ENCODE measurements at regions of chr7 and their contacts with region 1.

Region 1: DNA sequence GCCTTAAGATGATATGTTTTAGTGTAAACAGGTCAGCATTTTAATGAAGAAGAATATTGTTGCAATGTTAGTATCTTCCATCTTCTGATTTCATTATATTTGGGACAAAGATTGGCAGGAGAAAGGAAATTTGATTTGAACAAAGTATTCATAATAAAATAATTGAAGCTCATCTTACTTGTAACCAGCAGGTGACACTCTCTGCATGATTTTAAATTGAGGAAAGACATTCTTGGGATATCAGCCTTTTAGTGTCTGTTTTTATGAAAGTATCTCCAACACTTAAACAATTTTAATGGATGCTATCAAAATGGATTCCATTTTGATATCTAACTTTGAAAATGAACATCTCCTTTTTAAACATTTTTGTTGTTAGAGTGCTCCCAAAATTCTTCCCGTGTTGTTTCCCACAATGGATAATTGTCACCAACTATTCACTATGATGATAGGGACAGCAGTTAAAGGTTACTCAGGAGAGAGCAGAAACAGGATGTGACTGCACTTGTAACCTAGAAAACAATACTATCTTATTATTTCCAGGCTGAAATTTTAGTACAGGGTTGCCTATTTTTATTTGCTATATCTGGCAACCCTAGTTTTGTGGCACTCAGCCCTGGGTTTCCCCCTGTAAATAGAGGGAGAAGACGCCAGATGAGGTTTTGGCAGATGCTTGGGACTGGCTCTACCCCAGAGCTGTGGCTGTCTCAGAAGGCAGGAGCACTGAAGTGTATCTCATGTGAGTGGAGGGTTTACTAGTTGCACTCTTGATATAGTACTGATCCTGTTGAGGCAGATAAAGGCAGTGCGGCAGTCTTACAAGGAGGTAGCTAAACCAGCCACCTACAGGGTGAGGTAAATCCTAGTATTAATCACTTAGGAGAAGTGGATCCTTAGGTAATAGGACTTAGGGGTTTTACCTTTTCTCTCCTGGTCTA is 31.0 kb upstream of the ABCB4 start:
- DNase-seq: peak; percentile 43
- ATAC-seq: peak; percentile 57; the same call in 1 of the 2 replicates
- H3K4me3 ChIP-seq: no peak overlapping the region
- H3K27ac ChIP-seq: no peak overlapping the region
- H3K4me1 ChIP-seq: peaks cover 3% of the 10 kb centered on the region; the same call in 1 of the 2 replicates
- H3K27me3 ChIP-seq: peaks cover 2% of the 10 kb centered on the region; the same call in 1 of the 2 replicates
- CTCF ChIP-seq: peak; percentile 70
- POLR2A ChIP-seq: no peak
- RAD21 ChIP-seq: peak; percentile 68

Region 2: GRCh38 chr7:87528741-87529140 is 22.2 kb after region 1 on chr7:
- CTCF ChIA-PET with region 1: no interaction called
- POLR2A ChIA-PET with region 1: no interaction called
- dilution Hi-C with region 1: no loop called
- in situ Hi-C with region 1: no loop called
- intact Hi-C with region 1: no loop called
- DNase-seq: no peak
- ATAC-seq: no peak
- H3K4me3 ChIP-seq: no peak overlapping the region
- H3K27ac ChIP-seq: no peak overlapping the region
- H3K4me1 ChIP-seq: no peaks in the 10 kb centered on the region
- H3K27me3 ChIP-seq: no peaks in the 10 kb centered on the region; the same call in 1 of the 2 replicates
- CTCF ChIP-seq: no peak
- POLR2A ChIP-seq: no peak
- RAD21 ChIP-seq: no peak

Region 3: GRCh38 chr7:87797798-87798403 is 291.4 kb after region 1 on chr7:
- CTCF ChIA-PET with region 1: no interaction called
- POLR2A ChIA-PET with region 1: no interaction called
- dilution Hi-C with region 1: no loop called
- in situ Hi-C with region 1: no loop called
- intact Hi-C with region 1: loop called (anchors 5 kb)
- DNase-seq: peak; percentile 47
- ATAC-seq: peak; percentile 79
- H3K4me3 ChIP-seq: no peak overlapping the region
- H3K27ac ChIP-seq: no peak overlapping the region
- H3K4me1 ChIP-seq: no peaks in the 10 kb centered on the region
- H3K27me3 ChIP-seq: no peaks in the 10 kb centered on the region
- CTCF ChIP-seq: peak; percentile 67
- POLR2A ChIP-seq: no peak
- RAD21 ChIP-seq: peak; percentile 70

Measured in IMR-90 (cell line).